ENCODE measurements at regions of chr1 and their contacts with region 1.

Region 1: DNA sequence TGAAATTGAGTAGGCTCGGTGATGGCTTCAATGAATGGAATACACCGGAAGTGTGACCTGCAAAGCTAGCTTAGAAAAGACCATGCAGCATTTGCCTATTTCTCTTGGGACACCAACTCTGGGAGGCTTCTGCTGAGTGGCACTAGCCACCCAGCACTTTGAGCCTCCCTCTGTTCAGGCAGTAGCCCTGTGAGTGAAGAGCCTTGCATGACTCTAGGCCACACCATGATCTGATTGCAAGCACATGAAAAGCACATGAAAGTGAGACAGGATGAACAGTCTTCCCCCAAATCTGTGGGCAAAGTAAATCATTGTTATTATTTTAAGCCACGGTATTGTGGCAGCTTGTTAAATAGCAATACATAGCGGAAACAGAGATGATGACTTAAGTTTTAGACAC is 2.8 kb downstream of the CD48 start:
- DNase-seq: no peak
- H3K4me3 ChIP-seq: peak overlapping the region; percentile 70 to 99 (median 94)
- H3K4me3 Mint-ChIP-seq: no peak overlapping the region
- H3K27ac ChIP-seq: peak overlapping the region; percentile 85 to 98
- H3K27ac Mint-ChIP-seq: no peak overlapping the region
- H3K4me1 ChIP-seq: peaks cover 83 to 93% of the 10 kb centered on the region in 2 donors
- H3K4me1 Mint-ChIP-seq: peaks cover 18% of the 10 kb centered on the region
- H3K27me3 ChIP-seq: no peaks in the 10 kb centered on the region
- H3K27me3 Mint-ChIP-seq: no peaks in the 10 kb centered on the region
- CTCF ChIP-seq: no peak

Region 2: GRCh38 chr1:160646711-160647328 is 62.0 kb before region 1 on chr1 and contains the start of gene SLAMF1:
- intact Hi-C with region 1: no loop called
- DNase-seq: peak; percentile 75 to 90 (median 76)
- H3K4me3 ChIP-seq: peak within 1 kb of the TSS; percentile 3 to 64 (median 13)
- H3K4me3 Mint-ChIP-seq: peak within 1 kb of the TSS; percentile 63 to 82
- H3K27ac ChIP-seq: peak within 1 kb of the TSS; percentile 44 to 84
- H3K27ac Mint-ChIP-seq: peak within 1 kb of the TSS; percentile 32 to 87 (median 60)
- H3K4me1 ChIP-seq: peaks cover 19 to 29% of the 10 kb centered on the region in 2 donors
- H3K4me1 Mint-ChIP-seq: peaks cover 35% of the 10 kb centered on the region
- H3K27me3 ChIP-seq: no peaks in the 10 kb centered on the region
- H3K27me3 Mint-ChIP-seq: peaks cover 0 to 4% (median 1%) of the 10 kb centered on the region in 3 donors
- CTCF ChIP-seq: no peak
- polyA plus RNA-seq, gene SLAMF1: 0.13 to 0.65 TPM in 2 of 3 donors, not detected in the other

Region 3: DNA sequence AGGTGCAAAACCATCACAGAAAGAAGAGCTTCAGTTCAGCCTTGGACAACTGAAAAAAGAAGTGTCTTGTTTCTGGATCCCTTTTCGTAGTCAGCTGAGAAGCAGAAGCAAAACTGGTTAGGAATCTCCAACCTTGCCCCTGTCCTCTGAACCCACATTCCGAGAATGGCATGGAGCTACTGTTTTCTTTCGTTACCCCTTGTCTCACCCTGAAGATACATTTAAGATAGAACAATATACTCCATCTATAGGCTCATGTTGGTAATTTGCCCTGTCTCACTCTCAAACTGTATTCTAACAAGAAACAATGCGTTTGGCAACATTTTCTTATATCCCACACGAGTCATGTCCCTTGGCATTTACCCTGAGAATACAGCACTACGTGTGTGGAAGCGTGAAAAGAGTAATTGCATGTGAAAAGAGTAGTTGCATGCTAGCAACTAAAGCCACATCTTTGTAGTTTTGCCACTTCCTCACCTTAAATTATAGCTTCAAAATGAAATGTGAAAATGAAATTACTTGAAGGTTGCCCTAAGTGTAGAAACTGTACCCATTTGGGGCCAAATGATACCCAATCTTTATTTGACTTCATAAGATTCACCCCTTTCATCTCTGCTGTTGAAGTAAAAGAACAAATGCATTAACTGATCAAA is 35.5 kb after region 1 on chr1:
- intact Hi-C with region 1: loop called in 1 of 2 experiments (anchors 5 kb)
- DNase-seq: peak in 2 of 3 donors; percentile 21 to 67
- H3K4me3 ChIP-seq: no peak overlapping the region
- H3K4me3 Mint-ChIP-seq: peak overlapping the region in 1 of 2 donors; percentile 37
- H3K27ac ChIP-seq: peak overlapping the region in 1 of 2 donors; percentile 15
- H3K27ac Mint-ChIP-seq: peak overlapping the region in 5 of 7 donors; percentile 31 to 81 (median 68)
- H3K4me1 ChIP-seq: peaks cover 69 to 76% of the 10 kb centered on the region in 2 donors
- H3K4me1 Mint-ChIP-seq: peaks cover 71% of the 10 kb centered on the region
- H3K27me3 ChIP-seq: no peaks in the 10 kb centered on the region
- H3K27me3 Mint-ChIP-seq: peaks cover 0 to 2% (median 1%) of the 10 kb centered on the region in 3 donors
- CTCF ChIP-seq: no peak

Region 4: DNA sequence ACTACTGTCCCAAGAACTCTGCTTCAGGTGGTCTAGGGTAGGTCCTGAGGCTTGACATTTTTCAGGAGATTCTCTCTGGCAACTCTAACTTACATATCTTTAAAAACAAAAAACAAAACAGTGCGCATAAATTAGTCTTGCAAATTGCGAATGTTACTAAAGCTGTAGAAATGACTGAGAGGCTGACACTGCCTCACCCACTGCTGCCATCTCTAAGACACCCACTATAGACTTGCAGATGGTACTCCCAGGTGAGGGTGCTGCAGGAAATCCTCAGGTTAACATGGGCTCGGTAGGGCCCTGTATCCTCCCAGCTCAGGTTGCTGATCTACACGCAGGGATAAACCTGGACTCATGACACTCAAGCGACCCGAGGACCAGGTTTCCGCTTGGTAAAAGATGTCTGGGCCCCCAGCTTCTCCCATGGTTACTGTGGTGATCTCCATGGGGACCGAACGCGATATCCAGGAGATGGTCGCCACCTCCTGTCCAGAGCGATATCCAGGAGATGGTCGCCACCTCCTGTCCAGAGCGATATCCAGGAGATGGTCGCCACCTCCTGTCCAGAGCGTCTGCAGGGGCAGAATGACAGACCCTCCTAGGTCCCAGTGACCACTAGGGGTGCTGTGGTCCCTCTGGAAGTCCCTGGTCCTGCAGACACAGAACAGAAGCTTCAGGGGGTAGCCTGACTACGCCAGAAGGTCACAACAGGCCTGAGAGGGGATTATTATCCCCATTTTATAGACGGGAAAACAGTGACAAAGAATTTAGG is 71.0 kb after region 1 on chr1:
- intact Hi-C with region 1: no loop called
- DNase-seq: peak in 1 of 3 donors; percentile 28
- H3K4me3 ChIP-seq: no peak overlapping the region
- H3K4me3 Mint-ChIP-seq: no peak overlapping the region
- H3K27ac ChIP-seq: no peak overlapping the region
- H3K27ac Mint-ChIP-seq: peak overlapping the region in 1 of 7 donors; percentile 18
- H3K4me1 ChIP-seq: peaks cover 24 to 26% of the 10 kb centered on the region in 2 donors
- H3K4me1 Mint-ChIP-seq: peaks cover 33% of the 10 kb centered on the region
- H3K27me3 ChIP-seq: no peaks in the 10 kb centered on the region
- H3K27me3 Mint-ChIP-seq: no peaks in the 10 kb centered on the region
- CTCF ChIP-seq: peak; percentile 48

Region 5: DNA sequence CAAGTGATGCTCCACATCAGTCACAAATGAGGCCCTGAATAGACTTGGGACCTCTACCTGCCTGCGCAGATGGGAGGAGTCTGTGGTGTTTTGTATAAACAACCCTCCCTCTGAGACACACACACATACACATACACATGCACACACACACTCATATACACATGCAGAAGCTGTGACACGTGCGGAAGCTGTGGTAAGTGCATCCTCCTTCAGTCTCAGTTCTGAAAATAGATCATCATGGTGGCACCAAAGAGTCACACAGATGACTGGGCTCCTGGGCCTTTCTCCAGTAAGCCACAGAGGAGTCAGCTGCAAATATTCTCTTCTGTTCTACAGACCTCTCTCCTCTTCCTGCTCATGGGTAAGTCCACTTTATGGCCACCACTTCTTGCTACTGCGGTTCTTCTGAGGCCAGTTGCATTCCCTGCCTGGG is 87.2 kb after region 1 on chr1 and contains the start of gene LY9:
- intact Hi-C with region 1: loop called in 1 of 2 experiments (anchors 10 kb)
- DNase-seq: peak; percentile 70 to 88 (median 80)
- H3K4me3 ChIP-seq: no peak within 1 kb of the TSS
- H3K4me3 Mint-ChIP-seq: peak within 1 kb of the TSS; percentile 39 to 57
- H3K27ac ChIP-seq: peak within 1 kb of the TSS; percentile 34 to 53
- H3K27ac Mint-ChIP-seq: peak within 1 kb of the TSS; percentile 34 to 94 (median 82)
- H3K4me1 ChIP-seq: peaks cover 18 to 22% of the 10 kb centered on the region in 2 donors
- H3K4me1 Mint-ChIP-seq: peaks cover 28% of the 10 kb centered on the region
- H3K27me3 ChIP-seq: no peaks in the 10 kb centered on the region
- H3K27me3 Mint-ChIP-seq: peaks cover 0 to 3% (median 2%) of the 10 kb centered on the region in 3 donors
- CTCF ChIP-seq: no peak
- polyA plus RNA-seq, gene LY9: 1.4 to 2.7 (median 1.7) TPM